ENCODE measurements at regions of chr19 and their contacts with region 1.

Region 1: GRCh38 chr19:45336696-45337251 is 3.8 kb upstream of the KLC3 start:
- DNase-seq: no peak
- ATAC-seq: no peak
- H3K4me3 ChIP-seq: no peak overlapping the region
- H3K27ac ChIP-seq: no peak overlapping the region
- H3K4me1 ChIP-seq: no peaks in the 10 kb centered on the region
- H3K27me3 ChIP-seq: no peaks in the 10 kb centered on the region

Region 2: DNA sequence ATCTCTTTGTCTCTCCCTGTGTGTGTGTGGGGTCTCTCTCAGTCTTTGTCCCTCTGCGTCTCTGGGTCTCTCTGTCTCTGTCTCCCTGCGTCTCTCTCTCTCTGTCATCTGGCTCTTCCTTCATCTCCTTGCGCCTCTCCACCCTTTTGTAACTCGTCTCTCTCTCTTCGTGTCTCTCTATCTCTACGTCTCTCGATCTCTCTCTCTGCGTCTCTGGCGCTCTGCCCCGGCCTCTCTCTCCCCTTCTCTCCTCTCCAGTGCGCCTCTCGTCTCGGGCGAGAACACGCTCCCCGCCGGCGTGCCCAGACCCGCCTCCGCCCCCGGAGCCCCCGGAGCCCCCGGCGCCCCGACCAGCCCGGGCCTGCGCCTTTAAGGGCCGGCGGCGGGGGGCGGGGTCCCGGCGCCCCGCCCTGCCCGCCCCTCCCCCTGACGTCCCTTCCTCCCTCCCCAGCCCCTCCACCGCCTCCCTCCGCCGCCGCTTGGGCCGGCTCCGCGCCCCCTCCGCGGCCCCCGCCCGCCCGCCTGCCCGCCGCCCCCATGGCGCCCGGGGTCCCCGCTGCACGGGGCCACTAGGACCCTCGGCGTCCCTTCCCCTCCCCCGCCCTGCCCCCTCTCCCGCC is 85.8 kb before region 1 on chr19 and contains the start of gene MARK4:
- intact Hi-C with region 1: loop called in 1 of 2 experiments (anchors 5 kb)
- DNase-seq: peak; percentile 67 to 85
- ATAC-seq: peak; percentile 67
- H3K4me3 ChIP-seq: peak within 1 kb of the TSS; percentile 83 to 97
- H3K27ac ChIP-seq: no peak within 1 kb of the TSS
- H3K4me1 ChIP-seq: no peaks in the 10 kb centered on the region
- H3K27me3 ChIP-seq: no peaks in the 10 kb centered on the region
- total RNA-seq, gene MARK4: 40.3 to 40.4 TPM

Region 3: GRCh38 chr19:45264781-45265317 is 71.9 kb before region 1 on chr19:
- intact Hi-C with region 1: no loop called
- DNase-seq: no peak
- ATAC-seq: no peak
- H3K4me3 ChIP-seq: no peak overlapping the region
- H3K27ac ChIP-seq: no peak overlapping the region
- H3K4me1 ChIP-seq: no peaks in the 10 kb centered on the region
- H3K27me3 ChIP-seq: no peaks in the 10 kb centered on the region

Region 4: GRCh38 chr19:45385392-45386221 is 48.8 kb after region 1 on chr19:
- intact Hi-C with region 1: no loop called
- DNase-seq: no peak
- ATAC-seq: peak; percentile 41
- H3K4me3 ChIP-seq: no peak overlapping the region
- H3K27ac ChIP-seq: no peak overlapping the region
- H3K4me1 ChIP-seq: no peaks in the 10 kb centered on the region
- H3K27me3 ChIP-seq: no peaks in the 10 kb centered on the region